CD14-positive monocyte (primary cell): ENCODE measurements at regions of chr6 and their contacts with region 1.

Region 1: DNA sequence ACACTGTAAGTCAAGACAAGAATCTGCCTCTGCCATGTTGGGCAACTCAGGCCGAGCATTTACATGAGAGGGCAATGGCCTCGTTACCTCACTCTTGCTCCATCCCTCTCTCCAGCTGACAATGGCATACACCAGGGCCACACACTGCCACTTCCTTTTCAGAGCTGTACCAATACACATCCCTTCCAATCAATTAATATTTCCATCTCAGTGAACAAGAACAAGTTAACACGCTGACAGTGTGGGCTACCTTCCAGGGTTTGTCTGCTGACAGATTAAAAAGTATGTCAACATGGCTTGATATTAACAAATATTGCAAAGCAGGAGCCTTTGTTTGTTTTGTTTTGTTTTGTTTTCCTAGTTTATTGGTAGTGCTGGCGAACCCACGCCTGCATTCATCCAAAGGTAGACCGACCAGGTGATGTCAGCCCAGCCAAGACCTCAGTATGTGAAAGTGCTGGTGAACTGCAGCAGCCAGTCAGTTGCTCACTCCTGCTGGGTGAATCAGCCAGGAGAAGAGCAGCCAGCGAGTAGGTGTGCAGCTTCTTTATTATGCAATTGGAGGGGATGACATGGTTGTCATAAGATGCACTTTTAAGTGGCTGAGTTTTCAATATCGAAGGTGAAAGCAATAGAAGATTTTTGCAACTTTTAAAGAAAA is 487.3 kb upstream of the JARID2 start:
- DNase-seq: peak; percentile 79 to 91 (median 87)
- H3K4me3 ChIP-seq: no peak overlapping the region
- H3K4me3 Mint-ChIP-seq: peak overlapping the region; percentile 39 to 62
- H3K27ac ChIP-seq: peak overlapping the region; percentile 85 to 91
- H3K27ac Mint-ChIP-seq: peak overlapping the region; percentile 89 to 97 (median 95)
- H3K4me1 ChIP-seq: peaks cover 44 to 46% of the 10 kb centered on the region in 2 donors
- H3K4me1 Mint-ChIP-seq: peaks cover 50% of the 10 kb centered on the region
- H3K27me3 ChIP-seq: no peaks in the 10 kb centered on the region
- H3K27me3 Mint-ChIP-seq: peaks cover 0 to 6% (median 3%) of the 10 kb centered on the region in 3 donors
- CTCF ChIP-seq: no peak

Region 2: GRCh38 chr6:14655201-14656061 is 103.1 kb before region 1 on chr6:
- intact Hi-C with region 1: no loop called
- DNase-seq: no peak
- H3K4me3 ChIP-seq: no peak overlapping the region
- H3K4me3 Mint-ChIP-seq: peak overlapping the region in 1 of 2 donors; percentile 15
- H3K27ac ChIP-seq: peak overlapping the region in 1 of 2 donors; percentile 87
- H3K27ac Mint-ChIP-seq: peak overlapping the region in 6 of 7 donors; percentile 78 to 98 (median 88)
- H3K4me1 ChIP-seq: peaks cover 42 to 50% of the 10 kb centered on the region in 2 donors
- H3K4me1 Mint-ChIP-seq: peaks cover 47% of the 10 kb centered on the region
- H3K27me3 ChIP-seq: no peaks in the 10 kb centered on the region
- H3K27me3 Mint-ChIP-seq: peaks cover 0 to 2% (median 0%) of the 10 kb centered on the region in 3 donors
- CTCF ChIP-seq: no peak

Region 3: GRCh38 chr6:14743465-14744211 is 14.9 kb before region 1 on chr6:
- intact Hi-C with region 1: loop called in 1 of 2 experiments (anchors 2 kb)
- DNase-seq: peak; percentile 99 to 100 (median 99)
- H3K4me3 ChIP-seq: no peak overlapping the region
- H3K4me3 Mint-ChIP-seq: peak overlapping the region; percentile 4 to 70
- H3K27ac ChIP-seq: peak overlapping the region; percentile 97 to 100
- H3K27ac Mint-ChIP-seq: peak overlapping the region; percentile 98 to 100 (median 100)
- H3K4me1 ChIP-seq: peaks cover 32 to 48% of the 10 kb centered on the region in 2 donors
- H3K4me1 Mint-ChIP-seq: peaks cover 55% of the 10 kb centered on the region
- H3K27me3 ChIP-seq: no peaks in the 10 kb centered on the region
- H3K27me3 Mint-ChIP-seq: peaks cover 0 to 5% (median 0%) of the 10 kb centered on the region in 3 donors
- CTCF ChIP-seq: no peak

Region 4: GRCh38 chr6:15207923-15208322 is 449.4 kb after region 1 on chr6:
- intact Hi-C with region 1: no loop called
- DNase-seq: peak in 1 of 3 donors; percentile 56
- H3K4me3 ChIP-seq: no peak overlapping the region
- H3K4me3 Mint-ChIP-seq: no peak overlapping the region
- H3K27ac ChIP-seq: peak overlapping the region in 1 of 2 donors; percentile 12
- H3K27ac Mint-ChIP-seq: peak overlapping the region in 5 of 7 donors; percentile 33 to 79 (median 71)
- H3K4me1 ChIP-seq: peaks cover 13 to 23% of the 10 kb centered on the region in 2 donors
- H3K4me1 Mint-ChIP-seq: peaks cover 25% of the 10 kb centered on the region
- H3K27me3 ChIP-seq: no peaks in the 10 kb centered on the region
- H3K27me3 Mint-ChIP-seq: peaks cover 0 to 6% (median 0%) of the 10 kb centered on the region in 3 donors
- CTCF ChIP-seq: no peak